Endothelial cell of umbilical vein (primary cell): ENCODE measurements at regions of chr12 and their contacts with region 1.

Region 1: DNA sequence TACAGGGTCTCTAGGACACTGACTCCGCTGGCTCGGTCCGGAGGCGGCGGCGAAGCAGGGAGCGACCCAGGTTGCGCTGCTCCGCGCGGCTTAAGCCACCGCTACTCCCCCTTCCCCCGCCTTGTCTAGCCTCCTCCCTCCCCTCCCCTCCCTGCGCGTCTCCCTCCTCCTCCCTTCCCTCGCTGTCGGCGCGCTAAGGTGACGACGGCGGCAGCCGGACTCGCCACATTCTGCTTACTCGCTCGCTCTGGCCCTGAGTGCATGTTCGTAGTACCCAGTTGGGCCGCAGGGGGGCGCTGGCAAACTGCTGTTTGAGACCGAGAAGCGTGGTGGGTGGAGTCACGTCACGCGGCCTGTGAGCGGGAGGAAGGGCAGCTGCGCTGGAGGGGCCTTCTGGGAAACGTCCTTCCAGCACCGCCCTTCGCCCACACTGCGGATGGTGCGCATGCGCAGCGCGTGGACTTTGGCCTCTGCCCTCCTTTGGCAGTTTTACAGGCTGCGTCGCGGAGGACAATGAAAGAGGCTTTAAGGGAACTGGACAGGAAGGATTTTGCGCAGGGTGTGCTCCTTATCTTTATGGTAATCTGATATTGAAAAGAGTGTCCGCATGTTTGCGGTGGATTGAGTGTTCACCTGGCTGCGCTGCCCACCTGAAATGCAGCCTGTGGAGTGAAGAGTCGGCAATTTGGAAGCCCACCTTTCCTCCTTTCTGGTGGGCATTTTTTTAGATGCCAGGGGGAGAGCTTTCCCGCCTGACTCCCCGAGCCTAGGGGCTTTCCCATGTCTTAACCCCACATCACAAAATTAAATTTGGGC is at the start of gene SCAF11:
- DNase-seq: peak; percentile 100
- H3K4me3 ChIP-seq: peak within 1 kb of the TSS; percentile 56 to 91 (median 86)
- H3K27ac ChIP-seq: peak within 1 kb of the TSS; percentile 79
- H3K4me1 ChIP-seq: peaks cover 16% of the 10 kb centered on the region
- H3K27me3 ChIP-seq: no peaks in the 10 kb centered on the region
- CTCF ChIP-seq: peak; percentile 96 to 99
- POLR2A ChIP-seq: peak; percentile 16
- total RNA-seq, gene SCAF11: 95.0 and 109 TPM in 2 replicates

Region 2: GRCh38 chr12:45637706-45638105 is 353.0 kb before region 1 on chr12:
- CTCF ChIA-PET with region 1: no interaction called
- POLR2A ChIA-PET with region 1: no interaction called
- dilution Hi-C with region 1: no loop called
- intact Hi-C with region 1: loop called (anchors 10 kb)
- DNase-seq: peak; percentile 74
- H3K4me3 ChIP-seq: no peak overlapping the region
- H3K27ac ChIP-seq: peak overlapping the region; percentile 50
- H3K4me1 ChIP-seq: peaks cover 17% of the 10 kb centered on the region
- H3K27me3 ChIP-seq: peaks cover 0 to 2% of the 10 kb centered on the region in 2 experiments
- CTCF ChIP-seq: no peak
- POLR2A ChIP-seq: no peak

Region 3: GRCh38 chr12:45959728-45960127 is 30.9 kb before region 1 on chr12:
- CTCF ChIA-PET with region 1: interaction called, 3 read pairs
- POLR2A ChIA-PET with region 1: no interaction called
- dilution Hi-C with region 1: no loop called
- intact Hi-C with region 1: loop called (anchors 1 kb)
- DNase-seq: no peak
- H3K4me3 ChIP-seq: no peak overlapping the region
- H3K27ac ChIP-seq: no peak overlapping the region
- H3K4me1 ChIP-seq: peaks cover 15% of the 10 kb centered on the region
- H3K27me3 ChIP-seq: no peaks in the 10 kb centered on the region
- CTCF ChIP-seq: no peak
- POLR2A ChIP-seq: no peak

Region 4: GRCh38 chr12:46005151-46005797 is 14.6 kb after region 1 on chr12:
- CTCF ChIA-PET with region 1: interaction called, 10 read pairs
- POLR2A ChIA-PET with region 1: no interaction called
- dilution Hi-C with region 1: no loop called
- intact Hi-C with region 1: no loop called
- DNase-seq: peak; percentile 34
- H3K4me3 ChIP-seq: no peak overlapping the region
- H3K27ac ChIP-seq: no peak overlapping the region
- H3K4me1 ChIP-seq: no peaks in the 10 kb centered on the region
- H3K27me3 ChIP-seq: peaks cover 5 to 13% of the 10 kb centered on the region in 2 experiments
- CTCF ChIP-seq: no peak
- POLR2A ChIP-seq: no peak

Region 5: DNA sequence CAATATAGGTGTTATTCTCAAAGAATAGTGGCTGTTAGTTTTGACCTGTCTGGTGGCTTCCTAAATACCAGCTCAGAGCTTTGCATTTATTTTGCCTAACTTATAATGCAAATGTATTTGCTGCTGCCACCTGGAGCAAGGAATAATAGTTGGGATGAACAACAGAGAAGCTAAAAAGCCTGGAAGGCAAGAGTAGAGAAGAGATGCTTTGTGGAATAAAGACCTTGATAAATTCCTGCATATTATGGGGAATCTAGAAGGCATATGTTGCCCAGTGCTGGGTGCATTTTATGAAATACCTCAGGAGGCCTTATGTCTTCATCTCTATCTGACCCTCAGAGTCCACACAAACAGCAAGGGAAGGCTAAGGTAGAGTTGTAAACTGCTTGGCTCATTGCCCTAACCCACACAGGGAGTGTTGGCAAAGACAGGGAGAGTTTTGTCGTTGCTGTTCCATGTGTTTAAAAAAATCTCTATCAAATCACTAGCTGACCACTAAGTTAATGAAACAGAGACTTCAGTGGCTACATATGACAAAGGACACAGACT is 53.4 kb after region 1 on chr12:
- CTCF ChIA-PET with region 1: no interaction called
- POLR2A ChIA-PET with region 1: no interaction called
- dilution Hi-C with region 1: no loop called
- intact Hi-C with region 1: no loop called
- DNase-seq: no peak
- H3K4me3 ChIP-seq: no peak overlapping the region
- H3K27ac ChIP-seq: no peak overlapping the region
- H3K4me1 ChIP-seq: no peaks in the 10 kb centered on the region
- H3K27me3 ChIP-seq: peaks cover 0 to 8% of the 10 kb centered on the region in 2 experiments
- CTCF ChIP-seq: no peak
- POLR2A ChIP-seq: no peak